Gastrocnemius medialis (tissue), 4 donors: ENCODE measurements at regions of chr1 and their contacts with region 1.

Region 1: DNA sequence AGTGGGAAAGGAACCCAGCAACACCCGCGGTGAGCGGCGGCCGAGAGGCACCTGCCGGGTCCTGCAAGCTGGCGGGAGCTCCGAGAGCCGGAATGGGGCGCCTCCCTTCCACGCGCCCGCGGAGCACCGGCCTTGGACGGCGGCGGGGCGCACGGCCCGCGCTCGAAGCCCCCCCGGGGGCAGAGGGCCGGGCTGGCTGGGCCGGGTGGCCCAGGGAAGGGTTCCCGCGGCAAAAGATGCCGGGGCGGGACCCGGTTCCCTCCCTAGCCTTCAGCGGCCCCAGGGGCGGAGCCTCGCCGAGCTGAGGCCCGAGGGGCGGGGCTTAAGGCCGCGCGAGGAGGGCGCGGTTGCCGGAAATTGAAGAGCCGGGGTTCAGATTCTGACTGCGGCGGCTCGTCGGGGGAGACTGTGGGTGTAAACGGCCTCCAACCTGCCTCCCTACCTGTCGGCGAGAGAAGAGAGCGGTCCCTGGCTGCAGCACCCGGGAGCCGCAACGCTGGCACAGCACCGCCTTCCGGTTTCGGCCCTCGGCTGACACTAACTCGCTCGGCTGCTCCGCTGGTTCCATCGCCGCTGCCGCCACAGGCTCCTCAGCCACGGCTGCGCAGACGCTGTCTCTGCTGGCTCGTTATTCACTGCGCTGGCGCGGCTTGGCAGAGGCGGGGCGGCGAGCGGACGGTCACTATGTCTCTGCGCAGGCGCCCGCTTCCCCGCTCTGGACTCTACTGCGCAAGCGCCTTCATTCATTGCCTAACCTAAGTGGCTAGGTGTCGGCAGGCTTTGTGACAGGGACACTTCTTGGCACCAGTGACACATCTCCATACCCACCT is at the start of gene RABIF:
- DNase-seq: peak; percentile 91 to 96
- ATAC-seq: peak; percentile 95 to 96
- H3K4me3 ChIP-seq: peak within 1 kb of the TSS; percentile 77 to 98 (median 90)
- H3K27ac ChIP-seq: peak within 1 kb of the TSS; percentile 93 to 99 (median 96)
- H3K4me1 ChIP-seq: peaks cover 9 to 13% of the 10 kb centered on the region in 2 donors
- H3K27me3 ChIP-seq: no peaks in the 10 kb centered on the region
- CTCF ChIP-seq: peak in 2 of 5 experiments; percentile 23 to 36
- POLR2A ChIP-seq: peak; percentile 85 to 87
- total RNA-seq, gene RABIF: 2.6 to 9.2 (median 3.9) TPM

Region 2: DNA sequence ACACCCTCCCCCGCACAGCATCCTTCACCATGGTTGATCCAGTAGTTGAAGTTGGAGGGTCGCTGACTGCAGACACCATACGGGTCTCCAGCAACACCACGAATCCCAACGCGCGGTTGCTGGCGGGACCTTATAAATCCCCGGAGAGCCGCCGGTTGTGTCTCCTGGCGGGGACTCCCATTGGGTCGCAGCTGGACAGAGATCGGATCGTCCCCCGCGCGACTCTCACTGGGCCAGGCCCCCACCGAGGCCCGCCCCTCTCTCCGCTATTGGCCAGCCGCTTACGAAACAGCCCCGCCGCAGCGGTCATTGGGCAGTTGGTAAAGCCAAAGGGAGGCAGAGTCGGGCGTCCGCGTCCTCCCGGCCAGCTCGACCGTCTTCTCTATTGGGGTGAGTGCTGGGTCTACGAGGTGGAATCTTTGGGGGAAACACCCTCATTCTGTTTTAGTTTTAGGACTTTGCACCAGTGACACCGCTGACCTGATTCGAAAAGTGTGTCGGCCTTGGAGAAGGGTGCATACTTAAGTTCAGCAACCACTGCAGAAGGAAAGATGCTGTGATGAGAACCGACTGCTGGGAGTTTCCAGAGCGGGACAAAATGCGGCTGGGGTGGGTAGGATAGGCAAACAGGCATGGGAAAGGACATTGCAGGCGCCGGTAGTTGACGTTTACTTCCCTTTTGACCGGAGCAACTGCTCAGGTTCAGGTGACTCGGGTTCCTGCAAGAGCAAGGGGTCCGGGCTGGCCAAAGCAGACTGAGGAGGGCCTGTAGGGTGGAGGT is 27.1 kb before region 1 on chr1:
- in situ Hi-C with region 1: no loop called
- intact Hi-C with region 1: loop called (anchors 1 kb)
- DNase-seq: peak; percentile 85 to 87
- ATAC-seq: peak; percentile 93
- H3K4me3 ChIP-seq: peak overlapping the region; percentile 59 to 82 (median 72)
- H3K27ac ChIP-seq: peak overlapping the region in 1 of 4 donors; percentile 45
- H3K4me1 ChIP-seq: peaks cover 11 to 14% of the 10 kb centered on the region in 2 donors
- H3K27me3 ChIP-seq: no peaks in the 10 kb centered on the region
- CTCF ChIP-seq: no peak
- POLR2A ChIP-seq: peak in 1 of 2 donors; percentile 52

Region 3: GRCh38 chr1:202926720-202927491 is 38.2 kb after region 1 on chr1 and contains the start of gene KLHL12:
- in situ Hi-C with region 1: no loop called
- intact Hi-C with region 1: loop called (anchors 2 kb)
- DNase-seq: peak; percentile 94
- ATAC-seq: peak; percentile 94 to 97
- H3K4me3 ChIP-seq: peak within 1 kb of the TSS; percentile 75 to 100 (median 88)
- H3K27ac ChIP-seq: peak within 1 kb of the TSS; percentile 92 to 98 (median 94)
- H3K4me1 ChIP-seq: peaks cover 14 to 30% of the 10 kb centered on the region in 2 donors
- H3K27me3 ChIP-seq: no peaks in the 10 kb centered on the region
- CTCF ChIP-seq: peak; percentile 79 to 84 (median 81)
- POLR2A ChIP-seq: peak; percentile 78 to 83
- total RNA-seq, gene KLHL12: 12.1 to 24.0 (median 12.6) TPM